Activated B cell treated with CpG ODN at 0.5 μM for 24 hours (primary cell): ENCODE measurements at regions of chr12 and their contacts with region 1.

Region 1: GRCh38 chr12:12786716-12787601 is 1.5 kb downstream of the APOLD1 start:
- DNase-seq: peak; percentile 73
- ATAC-seq: peak; percentile 92
- H3K4me3 Mint-ChIP-seq: peak overlapping the region; percentile 87
- H3K27ac Mint-ChIP-seq: peak overlapping the region; percentile 86
- H3K4me1 Mint-ChIP-seq: peaks cover 23% of the 10 kb centered on the region
- H3K27me3 Mint-ChIP-seq: no peaks in the 10 kb centered on the region
- CTCF ChIP-seq: no peak

Region 2: DNA sequence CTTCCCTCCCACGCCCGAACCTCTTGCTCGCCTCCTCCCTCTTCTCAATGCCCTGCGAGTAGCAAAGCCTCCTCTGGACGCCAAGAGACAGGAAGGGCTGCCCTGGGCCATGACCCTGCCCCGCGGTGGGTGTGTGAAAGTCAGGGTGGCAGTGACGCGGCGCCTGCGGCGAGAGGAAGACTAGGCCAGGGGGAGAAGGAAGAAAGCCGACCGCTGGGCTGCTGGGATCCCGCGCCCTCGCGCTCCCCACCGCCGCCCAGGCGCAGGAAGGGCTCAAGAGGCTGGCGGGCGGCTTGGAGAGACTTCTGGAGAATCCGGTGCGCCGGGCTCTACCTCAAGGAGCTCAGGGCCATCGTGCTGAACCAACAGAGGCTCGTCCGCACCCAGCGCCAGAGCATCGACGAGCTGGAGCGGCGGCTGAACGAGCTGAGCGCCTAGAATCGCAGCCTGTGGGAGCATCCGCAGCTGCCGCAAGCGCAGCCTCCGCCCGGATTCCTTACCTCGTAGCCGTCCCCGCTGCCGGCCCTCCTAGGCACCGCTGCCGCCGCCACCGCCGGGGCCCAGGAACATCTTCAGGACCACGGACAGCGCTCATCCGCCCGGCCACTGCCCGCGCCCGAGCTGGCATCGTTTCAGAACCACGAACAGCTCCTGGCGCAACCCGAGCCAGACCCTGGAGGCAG is 1286.6 kb before region 1 on chr12:
- CTCF ChIA-PET with region 1: no interaction called
- POLR2A ChIA-PET with region 1: no interaction called
- intact Hi-C with region 1: no loop called
- DNase-seq: peak; percentile 68
- ATAC-seq: peak; percentile 76
- H3K4me3 Mint-ChIP-seq: no peak overlapping the region
- H3K27ac Mint-ChIP-seq: no peak overlapping the region
- H3K4me1 Mint-ChIP-seq: peaks cover 22% of the 10 kb centered on the region
- H3K27me3 Mint-ChIP-seq: peaks cover 44% of the 10 kb centered on the region
- CTCF ChIP-seq: no peak

Region 3: DNA sequence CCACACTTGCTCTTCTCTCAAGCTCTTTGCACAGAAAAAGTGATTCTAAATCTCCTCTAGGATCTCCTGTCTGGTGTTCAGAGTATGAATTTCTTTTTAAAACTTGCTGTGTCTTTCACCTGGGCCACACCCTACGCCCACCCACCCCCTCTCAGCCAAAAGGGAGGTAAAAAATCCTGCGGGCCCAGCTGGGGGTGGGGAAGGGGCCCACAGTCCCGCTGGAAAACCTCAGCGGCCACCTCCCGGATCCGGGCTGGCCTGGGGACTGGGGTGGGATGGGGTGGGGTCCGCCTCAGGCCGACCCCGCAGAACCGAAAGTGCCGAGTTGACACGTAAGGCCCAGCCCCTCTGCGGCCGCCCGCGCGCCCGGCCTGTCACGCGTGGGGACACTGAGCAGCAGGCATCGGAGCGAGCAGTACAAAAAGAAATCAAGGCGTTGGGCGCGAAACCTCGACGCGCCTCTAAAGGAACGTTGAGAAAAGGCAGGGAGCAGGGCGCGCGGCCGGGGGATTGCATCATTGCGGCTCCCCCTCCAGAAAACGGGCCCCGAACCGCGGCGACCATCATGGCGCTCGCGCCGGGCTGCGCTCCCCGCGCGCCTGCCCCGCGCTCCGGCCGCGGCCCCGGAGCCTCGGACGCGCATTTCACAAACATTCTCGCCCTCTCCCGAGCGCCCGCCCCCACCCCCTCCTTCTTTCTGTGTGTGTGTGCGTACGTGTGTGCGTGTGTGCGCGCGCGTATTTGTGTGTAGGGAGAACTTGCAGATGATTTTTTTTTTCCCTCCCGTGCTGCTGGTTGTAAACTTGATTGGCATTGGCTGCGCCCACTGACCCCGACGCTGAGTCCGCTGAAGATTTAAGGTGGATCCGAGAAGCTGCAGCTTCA is 62.1 kb before region 1 on chr12:
- CTCF ChIA-PET with region 1: no interaction called
- POLR2A ChIA-PET with region 1: interaction called, 19 read pairs
- intact Hi-C with region 1: loop called (anchors 2 kb)
- DNase-seq: peak; percentile 81
- ATAC-seq: peak; percentile 69
- H3K4me3 Mint-ChIP-seq: peak overlapping the region; percentile 97
- H3K27ac Mint-ChIP-seq: peak overlapping the region; percentile 97
- H3K4me1 Mint-ChIP-seq: peaks cover 50% of the 10 kb centered on the region
- H3K27me3 Mint-ChIP-seq: no peaks in the 10 kb centered on the region
- CTCF ChIP-seq: no peak

Region 4: DNA sequence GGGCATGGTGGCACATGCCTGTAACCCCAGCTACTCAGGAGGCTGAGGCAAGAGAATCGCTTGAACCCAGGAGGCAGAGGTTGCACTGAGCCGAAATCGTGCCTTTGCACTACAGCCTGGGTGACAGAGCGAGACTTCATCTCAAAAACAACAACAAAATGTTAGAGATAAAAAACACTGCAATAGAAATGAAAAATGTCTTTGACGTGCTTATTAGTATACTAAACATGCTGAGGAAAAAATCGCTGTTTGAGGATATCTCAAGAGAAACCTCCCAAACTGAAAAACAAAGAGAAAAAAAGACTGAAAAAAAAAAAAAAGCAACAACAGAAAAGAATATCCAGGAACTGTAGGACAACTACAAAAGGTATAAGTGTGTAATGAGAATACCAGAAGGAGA is 16.7 kb before region 1 on chr12:
- CTCF ChIA-PET with region 1: no interaction called
- POLR2A ChIA-PET with region 1: no interaction called
- intact Hi-C with region 1: no loop called
- DNase-seq: no peak
- ATAC-seq: no peak
- H3K4me3 Mint-ChIP-seq: no peak overlapping the region
- H3K27ac Mint-ChIP-seq: no peak overlapping the region
- H3K4me1 Mint-ChIP-seq: no peaks in the 10 kb centered on the region
- H3K27me3 Mint-ChIP-seq: no peaks in the 10 kb centered on the region
- CTCF ChIP-seq: no peak

Region 5: DNA sequence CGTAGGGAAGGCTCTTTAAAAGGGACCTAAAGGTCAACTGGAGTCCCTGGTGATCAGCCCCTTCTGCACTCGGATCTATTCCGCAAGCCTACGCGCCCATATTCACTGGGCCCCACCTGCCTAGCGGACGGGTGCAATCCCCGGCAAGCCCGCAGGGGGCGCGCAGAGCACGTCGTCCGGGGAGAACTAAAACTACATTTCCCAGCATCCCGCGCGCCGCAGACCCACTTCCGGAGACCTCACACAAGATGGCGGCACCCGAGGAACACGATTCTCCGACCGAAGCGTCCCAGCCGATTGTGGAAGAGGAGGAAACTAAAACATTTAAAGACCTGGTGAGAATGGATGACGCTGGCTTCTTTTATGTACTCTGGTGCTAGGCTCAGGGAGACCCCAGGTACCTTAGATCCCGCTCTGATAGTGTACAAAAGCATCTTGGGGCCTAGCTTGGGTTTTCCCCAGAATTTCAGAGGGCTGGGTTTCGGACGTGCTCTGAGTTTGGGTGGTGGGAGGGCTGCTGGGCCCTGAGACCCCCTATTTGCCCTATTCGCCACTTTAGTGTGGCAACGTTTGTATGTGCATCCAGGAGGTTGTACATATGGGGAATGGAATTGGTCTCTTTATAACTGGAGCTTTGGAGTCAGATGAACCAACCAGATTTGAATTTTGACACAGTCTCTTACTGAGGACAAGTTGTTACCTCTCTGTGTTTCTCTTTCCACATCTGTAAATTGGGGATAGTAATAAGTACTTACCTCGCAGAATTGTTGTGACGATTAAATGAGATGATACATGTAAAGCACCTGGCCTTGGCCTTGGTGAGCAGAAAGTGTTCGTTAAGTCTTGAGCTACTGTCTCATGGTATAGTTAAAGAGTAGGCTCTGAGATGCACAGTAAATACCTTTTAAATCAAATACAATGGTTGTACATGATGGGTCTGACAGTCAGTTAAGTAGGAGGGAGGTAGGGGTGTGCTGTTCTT is 26.5 kb after region 1 on chr12 and contains the start of gene DDX47:
- CTCF ChIA-PET with region 1: interaction called, 71 read pairs
- POLR2A ChIA-PET with region 1: interaction called, 36 read pairs
- intact Hi-C with region 1: loop called (anchors 1 kb)
- DNase-seq: peak; percentile 98
- ATAC-seq: peak; percentile 81
- H3K4me3 Mint-ChIP-seq: peak within 1 kb of the TSS; percentile 96
- H3K27ac Mint-ChIP-seq: peak within 1 kb of the TSS; percentile 93
- H3K4me1 Mint-ChIP-seq: peaks cover 69% of the 10 kb centered on the region
- H3K27me3 Mint-ChIP-seq: no peaks in the 10 kb centered on the region
- CTCF ChIP-seq: peak; percentile 87
- total RNA-seq, gene DDX47: 97.1 and 98.5 TPM in 2 replicates

Region 6: GRCh38 chr12:12890815-12891645 is 104.1 kb after region 1 on chr12 and contains the start of gene GPRC5A:
- CTCF ChIA-PET with region 1: no interaction called
- POLR2A ChIA-PET with region 1: interaction called, 4 read pairs
- intact Hi-C with region 1: loop called (anchors 5 kb)
- DNase-seq: no peak
- ATAC-seq: peak; percentile 37
- H3K4me3 Mint-ChIP-seq: peak within 1 kb of the TSS; percentile 81
- H3K27ac Mint-ChIP-seq: no peak within 1 kb of the TSS
- H3K4me1 Mint-ChIP-seq: peaks cover 12% of the 10 kb centered on the region
- H3K27me3 Mint-ChIP-seq: peaks cover 46% of the 10 kb centered on the region
- CTCF ChIP-seq: no peak
- total RNA-seq, gene GPRC5A: not detected in 2 replicates

Region 7: DNA sequence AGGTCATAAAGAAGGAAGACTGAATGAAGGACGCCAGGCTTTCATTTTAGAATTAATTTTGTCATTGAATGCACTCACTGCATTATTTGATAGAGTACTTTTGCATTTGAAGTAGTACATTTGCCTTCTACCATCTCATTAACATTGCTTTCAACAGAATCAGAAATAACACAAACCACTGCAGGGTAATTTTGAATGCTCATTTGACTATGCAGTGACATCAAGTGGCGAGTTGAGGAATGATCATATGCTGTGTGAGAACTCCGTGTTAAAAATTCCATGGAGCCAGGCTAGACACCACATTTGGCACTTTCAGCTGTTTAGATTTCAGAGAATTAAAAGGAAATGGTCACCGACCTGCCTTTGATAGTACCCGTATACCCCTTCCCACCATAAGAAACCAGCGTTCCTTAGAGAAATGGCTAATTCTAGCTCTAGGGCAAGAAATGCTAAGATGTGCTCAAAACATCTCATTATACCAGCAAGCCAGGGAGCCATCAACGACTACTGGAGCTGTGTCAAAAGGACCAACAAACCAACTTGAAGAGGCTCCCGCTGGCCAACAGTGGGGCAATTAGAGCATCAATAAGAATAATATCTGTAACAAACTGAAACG is 196.6 kb after region 1 on chr12:
- CTCF ChIA-PET with region 1: no interaction called
- POLR2A ChIA-PET with region 1: no interaction called
- intact Hi-C with region 1: loop called (anchors 2 kb)
- DNase-seq: no peak
- ATAC-seq: no peak
- H3K4me3 Mint-ChIP-seq: no peak overlapping the region
- H3K27ac Mint-ChIP-seq: no peak overlapping the region
- H3K4me1 Mint-ChIP-seq: no peaks in the 10 kb centered on the region
- H3K27me3 Mint-ChIP-seq: no peaks in the 10 kb centered on the region
- CTCF ChIP-seq: no peak